Ovary (tissue), 10 donors: ENCODE measurements at regions of chr9 and their contacts with region 1.

Region 1: DNA sequence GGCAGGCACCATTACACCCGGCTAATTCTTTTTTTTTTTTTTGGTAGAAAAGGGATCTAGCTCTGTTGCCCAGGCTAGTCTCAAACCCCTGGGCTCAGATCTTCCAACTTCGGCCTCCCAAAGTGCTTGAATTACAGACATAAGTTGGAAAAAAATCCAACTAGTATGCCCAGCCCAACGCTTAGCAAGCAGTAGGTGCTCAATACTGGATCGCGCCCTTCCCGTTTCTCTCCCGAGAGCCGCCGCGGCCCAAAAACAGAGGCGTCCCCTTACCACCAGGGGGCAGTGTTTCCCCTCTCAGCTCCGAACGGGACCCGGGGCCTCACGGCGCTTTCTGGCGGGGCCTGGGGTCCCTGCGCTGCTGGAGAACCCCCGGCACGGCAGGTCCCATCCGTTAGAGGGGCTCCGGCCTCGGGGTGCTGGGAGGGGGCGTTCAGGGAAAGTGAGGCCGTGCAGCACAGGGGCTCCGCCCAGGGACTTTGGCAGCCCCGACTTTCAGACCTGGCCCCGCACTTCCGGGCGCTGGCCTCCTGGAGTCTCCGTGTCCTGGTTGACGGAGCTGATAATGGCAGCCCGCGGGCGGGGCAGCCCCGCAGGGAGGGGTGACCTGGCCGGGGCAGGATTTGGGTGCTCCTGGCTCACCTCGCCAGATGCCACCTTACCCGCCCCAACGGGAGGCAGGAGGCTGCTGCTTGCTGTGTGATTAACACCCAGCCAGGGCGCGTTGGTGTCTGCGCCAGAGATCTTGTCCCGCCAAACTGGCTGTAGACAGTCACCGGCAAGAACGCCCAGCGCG is 15.2 kb downstream of the PTGES start:
- DNase-seq: peak; percentile 78 to 87 (median 87)
- H3K4me3 ChIP-seq: peak overlapping the region; percentile 63
- H3K27ac ChIP-seq: peak overlapping the region in 1 of 2 donors; percentile 44
- H3K4me1 ChIP-seq: no peaks in the 10 kb centered on the region
- H3K27me3 ChIP-seq: no peaks in the 10 kb centered on the region
- CTCF ChIP-seq: peak; percentile 97 to 98 (median 97)
- EP300 ChIP-seq: no peak
- POLR2A ChIP-seq: no peak

Region 2: DNA sequence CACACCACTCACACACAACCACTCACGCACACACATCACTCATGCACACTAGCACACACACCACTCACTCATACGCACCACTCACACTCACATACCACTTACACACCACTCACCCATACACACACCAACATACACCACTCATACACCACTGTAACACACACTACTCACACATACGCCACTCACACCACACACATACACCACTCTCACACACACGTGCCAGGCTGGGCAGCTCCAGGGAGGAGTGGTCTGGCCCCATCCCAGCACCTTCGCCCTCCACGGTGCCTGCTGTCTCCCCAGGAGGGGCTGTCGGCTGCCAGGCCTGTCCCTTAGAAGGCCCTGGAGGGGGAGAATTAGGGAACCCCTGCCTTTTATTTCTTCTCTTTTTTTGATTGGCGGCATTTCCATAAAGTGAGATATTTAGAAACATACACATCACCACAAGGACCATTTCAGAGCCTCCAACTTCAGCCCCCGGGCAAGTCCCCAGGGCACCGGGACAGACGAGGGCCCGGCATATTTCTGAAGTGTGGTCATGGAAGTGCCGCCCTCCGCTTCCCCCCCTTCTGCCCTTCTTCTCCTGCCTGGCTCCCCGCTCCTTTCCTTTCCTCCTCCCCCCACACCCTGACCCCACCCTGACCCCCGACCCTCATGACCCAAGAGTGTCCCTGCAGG is 89.4 kb before region 1 on chr9:
- intact Hi-C with region 1: loop called in 1 of 4 experiments (anchors 5 kb)
- DNase-seq: no peak
- H3K4me3 ChIP-seq: no peak overlapping the region
- H3K27ac ChIP-seq: no peak overlapping the region
- H3K4me1 ChIP-seq: no peaks in the 10 kb centered on the region
- H3K27me3 ChIP-seq: no peaks in the 10 kb centered on the region
- CTCF ChIP-seq: no peak
- EP300 ChIP-seq: no peak
- POLR2A ChIP-seq: no peak

Region 3: GRCh38 chr9:129900263-129901027 is 162.8 kb after region 1 on chr9:
- intact Hi-C with region 1: no loop called
- DNase-seq: no peak
- H3K4me3 ChIP-seq: no peak overlapping the region
- H3K27ac ChIP-seq: no peak overlapping the region
- H3K4me1 ChIP-seq: no peaks in the 10 kb centered on the region
- H3K27me3 ChIP-seq: no peaks in the 10 kb centered on the region
- CTCF ChIP-seq: no peak
- EP300 ChIP-seq: no peak
- POLR2A ChIP-seq: no peak